HCT116 (cell line): ENCODE measurements at regions of chr2 and their contacts with region 1.

Region 1: GRCh38 chr2:231411831-231412617 is 16.5 kb downstream of the B3GNT7 start:
- DNase-seq: peak; percentile 31
- ATAC-seq: peak; percentile 96
- H3K4me3 ChIP-seq: peak overlapping the region; percentile 39 to 59
- H3K27ac ChIP-seq: peak overlapping the region; percentile 45; the same call in 1 of the 2 replicates
- H3K4me1 ChIP-seq: peaks cover 0 to 13% of the 10 kb centered on the region in 2 experiments; a peak in 1 of 4 replicates
- H3K27me3 ChIP-seq: no peaks in the 10 kb centered on the region
- CTCF ChIP-seq: peak; percentile 63 to 76 (median 72); a peak in 5 of 6 replicates
- POLR2A ChIP-seq: no peak
- RAD21 ChIP-seq: peak; percentile 85

Region 2: GRCh38 chr2:231139796-231140195 is 272.2 kb before region 1 on chr2:
- CTCF ChIA-PET with region 1: no interaction called
- POLR2A ChIA-PET with region 1: no interaction called
- RAD21 ChIA-PET with region 1: no interaction called
- intact Hi-C with region 1: no loop called
- DNase-seq: no peak
- ATAC-seq: no peak
- H3K4me3 ChIP-seq: no peak overlapping the region
- H3K27ac ChIP-seq: no peak overlapping the region
- H3K4me1 ChIP-seq: no peaks in the 10 kb centered on the region
- H3K27me3 ChIP-seq: no peaks in the 10 kb centered on the region
- CTCF ChIP-seq: no peak
- POLR2A ChIP-seq: no peak
- RAD21 ChIP-seq: no peak

Region 3: GRCh38 chr2:231227309-231228162 is 184.5 kb before region 1 on chr2:
- CTCF ChIA-PET with region 1: interaction called, 4 read pairs
- POLR2A ChIA-PET with region 1: no interaction called
- RAD21 ChIA-PET with region 1: no interaction called
- intact Hi-C with region 1: loop called (anchors 5 kb)
- DNase-seq: peak; percentile 56
- ATAC-seq: peak; percentile 99
- H3K4me3 ChIP-seq: no peak overlapping the region
- H3K27ac ChIP-seq: no peak overlapping the region
- H3K4me1 ChIP-seq: no peaks in the 10 kb centered on the region
- H3K27me3 ChIP-seq: no peaks in the 10 kb centered on the region
- CTCF ChIP-seq: peak; percentile 77 to 80 (median 80)
- POLR2A ChIP-seq: no peak
- RAD21 ChIP-seq: peak; percentile 92

Region 4: GRCh38 chr2:231297108-231297908 is 114.7 kb before region 1 on chr2:
- CTCF ChIA-PET with region 1: no interaction called
- POLR2A ChIA-PET with region 1: no interaction called
- RAD21 ChIA-PET with region 1: no interaction called
- intact Hi-C with region 1: loop called (anchors 1 kb)
- DNase-seq: peak; percentile 10
- ATAC-seq: peak; percentile 99
- H3K4me3 ChIP-seq: no peak overlapping the region
- H3K27ac ChIP-seq: no peak overlapping the region
- H3K4me1 ChIP-seq: no peaks in the 10 kb centered on the region
- H3K27me3 ChIP-seq: no peaks in the 10 kb centered on the region
- CTCF ChIP-seq: peak; percentile 65 to 79 (median 70); a peak in 5 of 6 replicates
- POLR2A ChIP-seq: no peak
- RAD21 ChIP-seq: peak; percentile 68

Region 5: DNA sequence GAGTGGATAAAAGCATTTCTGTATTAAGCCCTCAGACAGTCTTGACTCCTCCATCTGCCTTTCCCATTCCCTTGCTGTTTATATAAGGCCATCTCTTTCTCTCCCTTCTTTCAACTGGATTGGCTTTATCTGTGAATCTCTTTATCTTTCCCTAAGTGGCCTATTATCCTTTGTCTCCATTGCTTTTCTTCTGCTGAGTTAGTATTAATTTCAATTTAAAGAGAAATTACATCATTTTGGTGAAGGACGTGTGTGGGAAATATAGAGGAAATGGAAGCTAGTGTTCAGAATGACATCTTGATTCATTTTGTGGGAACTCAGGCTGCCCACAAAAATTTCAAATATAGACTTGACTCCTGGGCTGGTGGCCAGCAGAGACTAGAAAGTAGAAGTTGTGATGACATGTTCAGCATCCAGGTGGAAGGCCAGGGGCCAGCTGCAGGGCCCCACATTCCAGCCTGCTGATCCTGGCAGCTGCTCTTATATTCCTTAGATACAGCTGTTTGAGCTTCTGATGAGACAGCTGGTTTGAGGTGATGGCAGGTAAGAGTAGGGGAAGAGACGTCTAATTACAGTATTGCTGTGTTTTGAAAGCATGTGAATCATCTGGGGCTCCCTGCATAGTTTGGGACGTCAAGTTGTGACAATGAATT is 601.8 kb after region 1 on chr2:
- CTCF ChIA-PET with region 1: no interaction called
- POLR2A ChIA-PET with region 1: no interaction called
- RAD21 ChIA-PET with region 1: no interaction called
- intact Hi-C with region 1: no loop called
- DNase-seq: no peak
- ATAC-seq: peak; percentile 27; the same call in 1 of the 2 replicates
- H3K4me3 ChIP-seq: no peak overlapping the region
- H3K27ac ChIP-seq: no peak overlapping the region
- H3K4me1 ChIP-seq: peaks cover 2 to 11% of the 10 kb centered on the region in 2 experiments; a peak in 2 of 4 replicates
- H3K27me3 ChIP-seq: no peaks in the 10 kb centered on the region
- CTCF ChIP-seq: no peak
- POLR2A ChIP-seq: no peak
- RAD21 ChIP-seq: no peak